ENCODE measurements at regions of chr2 and their contacts with region 1.

Region 1: DNA sequence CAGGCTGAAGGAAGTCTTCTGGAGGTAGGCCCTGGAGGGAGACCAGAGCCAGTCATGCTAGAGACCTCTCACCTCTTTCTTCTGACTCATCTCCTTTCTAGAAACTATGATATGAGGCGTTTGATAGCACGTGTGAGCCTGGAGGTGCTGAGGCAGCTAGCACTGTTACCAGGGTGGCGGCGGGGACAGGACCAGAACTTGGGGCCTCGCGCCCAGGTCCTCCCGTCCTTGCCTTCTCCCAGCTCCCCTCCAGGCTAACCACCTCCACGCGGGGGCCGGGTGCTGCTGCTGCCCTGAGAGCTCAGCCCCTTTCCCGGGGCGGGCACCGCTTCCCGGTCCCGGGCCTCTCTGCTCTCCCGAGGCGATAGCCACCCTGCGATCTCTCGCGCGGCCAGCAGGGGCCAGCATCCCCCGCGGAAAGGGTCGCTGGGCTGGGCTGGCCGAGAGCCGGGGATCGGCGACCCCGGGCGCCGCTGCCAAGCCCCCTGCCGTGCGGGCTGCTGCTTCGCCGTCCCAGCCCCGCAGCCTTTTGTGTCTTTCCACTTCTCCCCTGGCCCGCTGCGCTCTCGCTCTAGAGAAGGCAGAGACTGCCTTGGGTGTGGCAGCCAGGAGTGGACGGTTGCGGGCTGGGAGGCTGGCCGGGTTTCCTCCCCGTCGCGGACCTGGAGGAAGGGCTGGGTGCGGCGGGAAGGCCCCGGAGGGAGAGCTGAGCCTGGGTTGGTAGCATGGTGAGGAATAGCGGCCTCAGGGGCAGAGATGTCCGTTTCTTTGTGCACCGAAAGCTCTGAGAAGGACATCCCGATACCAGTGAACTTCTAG is 49.1 kb downstream of the TMEM17 start:
- DNase-seq: peak; percentile 74 to 89 (median 85)
- H3K4me3 ChIP-seq: peak overlapping the region; percentile 74
- H3K27ac ChIP-seq: peak overlapping the region; percentile 77 to 78
- H3K4me1 ChIP-seq: peaks cover 5% of the 10 kb centered on the region
- H3K27me3 ChIP-seq: no peaks in the 10 kb centered on the region
- CTCF ChIP-seq: peak; percentile 90 to 100 (median 98)
- EP300 ChIP-seq: no peak
- POLR2A ChIP-seq: no peak

Region 2: DNA sequence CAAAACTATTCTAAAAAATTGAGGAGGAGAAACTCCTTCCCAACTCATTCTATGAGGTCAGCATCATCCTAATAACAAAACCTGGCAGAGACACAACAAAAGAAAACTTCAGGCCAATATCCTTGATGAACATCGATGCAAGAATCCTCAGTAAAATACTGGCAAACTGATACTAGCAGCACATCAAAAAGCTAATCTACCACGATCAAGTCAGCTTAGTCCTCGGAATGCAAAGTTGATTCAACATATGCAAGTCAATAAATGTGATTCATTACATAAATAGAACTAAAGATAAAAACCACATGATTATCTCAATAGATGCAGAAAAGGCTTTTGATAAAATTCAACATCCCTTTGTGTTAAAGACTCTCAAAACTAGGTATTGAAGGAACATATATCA is 311.7 kb after region 1 on chr2:
- intact Hi-C with region 1: loop called in 2 of 4 experiments (anchors 5 kb)
- DNase-seq: no peak
- H3K4me3 ChIP-seq: no peak overlapping the region
- H3K27ac ChIP-seq: no peak overlapping the region
- H3K4me1 ChIP-seq: no peaks in the 10 kb centered on the region
- H3K27me3 ChIP-seq: no peaks in the 10 kb centered on the region
- CTCF ChIP-seq: no peak
- EP300 ChIP-seq: no peak
- POLR2A ChIP-seq: no peak

Region 3: DNA sequence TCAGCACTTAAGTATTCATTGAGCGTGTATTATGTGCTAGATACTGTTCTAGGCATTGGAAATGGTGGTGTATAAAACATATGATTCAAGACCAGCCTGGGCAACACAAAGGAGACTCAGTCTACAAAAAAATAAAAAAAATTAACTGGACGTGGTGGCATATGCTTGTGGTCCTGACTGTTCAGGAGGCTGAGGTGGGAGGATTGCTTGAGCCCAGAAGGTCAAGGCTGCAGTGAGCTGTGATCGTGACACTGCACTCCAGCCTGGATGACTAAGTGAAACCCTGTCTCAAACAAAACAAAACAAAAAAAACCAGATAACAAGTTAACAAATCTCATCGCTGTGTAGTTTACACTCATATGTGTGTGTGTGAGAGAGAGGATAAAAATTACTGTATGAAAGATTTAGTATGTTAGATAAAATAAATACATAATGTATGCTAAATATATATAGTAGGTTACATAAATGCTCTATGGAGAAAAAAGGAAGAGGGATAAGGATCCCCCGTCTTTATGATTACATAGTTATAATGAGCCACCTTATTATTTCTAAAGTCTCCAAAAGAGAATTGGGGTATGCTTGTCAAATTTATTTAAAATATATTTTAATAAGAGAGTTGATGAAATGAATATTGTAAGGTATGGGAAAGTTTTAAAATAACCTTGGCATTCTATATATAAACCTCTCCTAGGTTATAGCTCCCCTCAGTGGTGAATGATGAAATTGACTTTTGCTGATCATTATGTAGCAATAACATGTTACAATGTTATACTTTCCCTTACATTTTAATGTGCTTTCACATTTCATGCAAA is 317.8 kb after region 1 on chr2:
- intact Hi-C with region 1: loop called (anchors 2 to 5 kb)
- DNase-seq: peak; percentile 54 to 69 (median 57)
- H3K4me3 ChIP-seq: no peak overlapping the region
- H3K27ac ChIP-seq: peak overlapping the region in 1 of 2 donors; percentile 24
- H3K4me1 ChIP-seq: peaks cover 6% of the 10 kb centered on the region
- H3K27me3 ChIP-seq: no peaks in the 10 kb centered on the region
- CTCF ChIP-seq: peak; percentile 38 to 63 (median 45)
- EP300 ChIP-seq: no peak
- POLR2A ChIP-seq: no peak

Measured in ovary (tissue), 10 donors.